Calu3 (cell line): ENCODE measurements at regions of chr1 and their contacts with region 1.

Region 1: DNA sequence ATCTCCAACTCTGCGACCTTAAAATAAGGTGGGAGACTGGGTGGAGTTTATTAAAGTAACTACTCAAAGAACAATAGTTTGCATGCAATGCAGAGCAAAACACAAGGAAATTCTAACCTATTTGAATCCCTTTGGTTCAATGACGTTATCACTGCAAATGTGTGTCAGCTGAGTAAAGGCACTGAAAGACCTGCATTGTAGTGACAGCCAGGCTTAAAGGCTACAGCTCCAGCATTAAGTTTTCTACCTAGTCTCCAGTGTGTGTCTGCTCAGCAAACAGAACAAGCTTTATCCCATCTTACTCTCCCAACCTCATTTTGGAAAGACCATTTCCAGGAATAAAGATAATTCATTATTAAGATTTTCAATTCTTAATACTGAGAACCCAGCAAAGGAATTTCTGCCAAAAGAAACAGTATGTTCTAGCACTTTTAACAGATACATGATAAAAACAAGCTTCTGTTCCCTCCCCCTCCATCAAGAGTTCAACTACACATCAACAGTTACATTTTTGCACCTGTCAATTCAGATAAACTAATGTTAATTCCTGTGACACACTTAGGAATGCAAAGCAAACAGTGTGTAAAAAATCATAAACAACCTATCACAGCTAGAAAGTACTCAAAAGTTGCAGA is 14.2 kb downstream of the PTP4A2 start:
- DNase-seq: no peak
- H3K4me3 Mint-ChIP-seq: peak overlapping the region; percentile 47
- H3K27ac Mint-ChIP-seq: peak overlapping the region; percentile 62
- H3K4me1 Mint-ChIP-seq: peaks cover 68% of the 10 kb centered on the region
- H3K27me3 Mint-ChIP-seq: no peaks in the 10 kb centered on the region
- CTCF ChIP-seq: no peak

Region 2: GRCh38 chr1:31843506-31843905 is 80.5 kb before region 1 on chr1:
- CTCF ChIA-PET with region 1: no interaction called
- intact Hi-C with region 1: no loop called
- DNase-seq: no peak
- H3K4me3 Mint-ChIP-seq: no peak overlapping the region
- H3K27ac Mint-ChIP-seq: no peak overlapping the region
- H3K4me1 Mint-ChIP-seq: peaks cover 13% of the 10 kb centered on the region
- H3K27me3 Mint-ChIP-seq: no peaks in the 10 kb centered on the region
- CTCF ChIP-seq: no peak

Region 3: DNA sequence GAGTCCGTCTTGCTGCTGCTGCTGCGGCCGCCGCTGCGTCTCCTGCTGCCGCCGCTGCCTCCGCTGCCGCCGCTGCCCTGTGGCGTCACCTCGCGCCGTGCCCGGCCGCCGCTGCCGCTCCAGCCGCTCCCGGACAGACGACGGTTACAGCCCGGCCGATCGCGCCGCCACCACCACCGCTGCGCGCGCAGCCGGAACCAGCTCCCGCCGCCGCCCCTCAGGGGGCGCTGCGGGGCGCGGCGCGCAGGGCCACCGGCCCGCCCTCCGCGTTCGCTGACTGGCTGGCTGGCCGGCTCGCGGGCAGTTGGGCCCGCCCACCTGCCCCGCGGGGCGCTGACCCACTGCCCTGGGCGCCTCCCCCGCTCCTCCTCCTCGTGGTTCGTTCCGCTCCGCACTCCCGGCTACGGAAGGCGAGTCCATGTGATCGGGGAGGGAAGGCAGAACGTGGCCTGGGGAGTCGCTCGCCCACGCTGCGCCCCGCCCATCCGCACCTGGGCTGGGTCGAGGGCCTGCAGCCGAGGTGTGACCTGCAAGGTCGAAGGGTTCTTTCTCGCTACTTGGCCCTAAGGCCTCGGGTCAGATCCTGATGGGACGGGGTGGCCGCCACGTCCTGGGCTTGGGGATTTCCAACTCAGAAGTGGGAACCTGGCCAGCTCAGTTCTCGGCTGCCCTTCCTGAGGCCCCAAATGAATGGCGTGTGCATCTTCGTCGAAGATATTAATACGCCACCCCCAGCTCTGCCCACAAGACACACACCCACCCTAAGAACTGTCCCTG is 14.3 kb after region 1 on chr1 and contains the start of gene PTP4A2:
- CTCF ChIA-PET with region 1: interaction called, 8 read pairs
- intact Hi-C with region 1: loop called (anchors 2 kb)
- DNase-seq: peak; percentile 97
- H3K4me3 Mint-ChIP-seq: peak within 1 kb of the TSS; percentile 96
- H3K27ac Mint-ChIP-seq: peak within 1 kb of the TSS; percentile 99
- H3K4me1 Mint-ChIP-seq: peaks cover 33% of the 10 kb centered on the region
- H3K27me3 Mint-ChIP-seq: no peaks in the 10 kb centered on the region
- CTCF ChIP-seq: peak; percentile 56
- total RNA-seq, gene PTP4A2: 337 and 366 TPM in 2 replicates

Region 4: GRCh38 chr1:31955917-31956736 is 32.1 kb after region 1 on chr1:
- CTCF ChIA-PET with region 1: interaction called, 3 read pairs
- intact Hi-C with region 1: loop called (anchors 5 kb)
- DNase-seq: peak; percentile 92
- H3K4me3 Mint-ChIP-seq: peak overlapping the region; percentile 20
- H3K27ac Mint-ChIP-seq: peak overlapping the region; percentile 100
- H3K4me1 Mint-ChIP-seq: peaks cover 54% of the 10 kb centered on the region
- H3K27me3 Mint-ChIP-seq: no peaks in the 10 kb centered on the region
- CTCF ChIP-seq: no peak

Region 5: DNA sequence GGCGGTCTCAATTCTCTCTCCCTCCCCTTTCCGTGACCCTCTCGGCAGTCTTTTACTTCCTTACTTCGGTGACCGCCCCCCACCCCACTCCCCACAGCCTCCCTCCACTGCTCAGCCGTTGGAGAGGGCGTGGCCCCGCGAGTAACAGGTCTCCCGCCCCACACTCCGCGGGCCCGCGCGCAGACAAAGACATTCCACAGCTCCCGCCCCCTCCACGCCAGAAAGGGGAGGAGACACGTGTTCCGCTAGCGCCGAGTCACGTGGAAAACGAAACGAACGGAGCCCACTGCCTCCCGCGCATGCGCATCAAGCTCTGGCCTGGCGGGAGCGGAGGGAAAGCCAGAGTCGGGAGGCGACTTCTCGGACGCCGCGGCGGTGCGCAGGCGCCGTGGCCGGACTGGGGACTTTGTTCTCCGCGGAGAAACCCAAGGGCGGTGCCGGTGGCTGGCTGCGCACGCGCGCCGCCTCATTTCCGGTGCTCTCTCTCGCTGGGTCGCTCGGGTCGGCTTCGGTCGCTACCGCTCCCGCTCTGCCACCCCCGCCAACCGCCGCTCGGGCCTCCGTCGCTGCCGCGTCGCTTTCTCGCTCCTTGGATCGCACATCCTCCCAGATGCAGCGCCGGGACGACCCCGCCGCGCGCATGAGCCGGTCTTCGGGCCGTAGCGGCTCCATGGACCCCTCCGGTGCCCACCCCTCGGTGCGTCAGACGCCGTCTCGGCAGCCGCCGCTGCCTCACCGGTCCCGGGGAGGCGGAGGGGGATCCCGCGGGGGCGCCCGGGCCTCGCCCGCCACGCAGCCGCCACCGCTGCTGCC is 89.6 kb after region 1 on chr1 and contains the start of gene KHDRBS1:
- CTCF ChIA-PET with region 1: no interaction called
- intact Hi-C with region 1: loop called (anchors 10 kb)
- DNase-seq: peak; percentile 98
- H3K4me3 Mint-ChIP-seq: peak within 1 kb of the TSS; percentile 98
- H3K27ac Mint-ChIP-seq: peak within 1 kb of the TSS; percentile 93
- H3K4me1 Mint-ChIP-seq: peaks cover 21% of the 10 kb centered on the region
- H3K27me3 Mint-ChIP-seq: no peaks in the 10 kb centered on the region
- CTCF ChIP-seq: no peak
- total RNA-seq, gene KHDRBS1: 158 and 159 TPM in 2 replicates